Activated T-helper 1 cell treated with anti-CD3 and anti-CD28 coated beads, Interleukin-12 subunit alpha, Interleukin-12 subunit beta, Interleukin-2, Interleukin-4 antibody, amounts not matched to agents 30 ng/mL and 10 ng/mL and 1 ng/mL, durations not matched to agents 14 hours and 24 hours and 36 hours (primary cell): ENCODE measurements at regions of chr1 and their contacts with region 1.

Region 1: GRCh38 chr1:201481761-201482493 is 12.9 kb upstream of the PHLDA3 start:
- DNase-seq: peak; percentile 71
- H3K4me3 Mint-ChIP-seq: peak overlapping the region; percentile 76
- H3K27ac Mint-ChIP-seq: no peak overlapping the region
- H3K4me1 Mint-ChIP-seq: peaks cover 26% of the 10 kb centered on the region
- H3K27me3 Mint-ChIP-seq: peaks cover 13% of the 10 kb centered on the region

Region 2: GRCh38 chr1:201085916-201086735 is 395.8 kb before region 1 on chr1:
- intact Hi-C with region 1: no loop called
- DNase-seq: no peak
- H3K4me3 Mint-ChIP-seq: no peak overlapping the region
- H3K27ac Mint-ChIP-seq: no peak overlapping the region
- H3K4me1 Mint-ChIP-seq: no peaks in the 10 kb centered on the region
- H3K27me3 Mint-ChIP-seq: peaks cover 12% of the 10 kb centered on the region

Region 3: DNA sequence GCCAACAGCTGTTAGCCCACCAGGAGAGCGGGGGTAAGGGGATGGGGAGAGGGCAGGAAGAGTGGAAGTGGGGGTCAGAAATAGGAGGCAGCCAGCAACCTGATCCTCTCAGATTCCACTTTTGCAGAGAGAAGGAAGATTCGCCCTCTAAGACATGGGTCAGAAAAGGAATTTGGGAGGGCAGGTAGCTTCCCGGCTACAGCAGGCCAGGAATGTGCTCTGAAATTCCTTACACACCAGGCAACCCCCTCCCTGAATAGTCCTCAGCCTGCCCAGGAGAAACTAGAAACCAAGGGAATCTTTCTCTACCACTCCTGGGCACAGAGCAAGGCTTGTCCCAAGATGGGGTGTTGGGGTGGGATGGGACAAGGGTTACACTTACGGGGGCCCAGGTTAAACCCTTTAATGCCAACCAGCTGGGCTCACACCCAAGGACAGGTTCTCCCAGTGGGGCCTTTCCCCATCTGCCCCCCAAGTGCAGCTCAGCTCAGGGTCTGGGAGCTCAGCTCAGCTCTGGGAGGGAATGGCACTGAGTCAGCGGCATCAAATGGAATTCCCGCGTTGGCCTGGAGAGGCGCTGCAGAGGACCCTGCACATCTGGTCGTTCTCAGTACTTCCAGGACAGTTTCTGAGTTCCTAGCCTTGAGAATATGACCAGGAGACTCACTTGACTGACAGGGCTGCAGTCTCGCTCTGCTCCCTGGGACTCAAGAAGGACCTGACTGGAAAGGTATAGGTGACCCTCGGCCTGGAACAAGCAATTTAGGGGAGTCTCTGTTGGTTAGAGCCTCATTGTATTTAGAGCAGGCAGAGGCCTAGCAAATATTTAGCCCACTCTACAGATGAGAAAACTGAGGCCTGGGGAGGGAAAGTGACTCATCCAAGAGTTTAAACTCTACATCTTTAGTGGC is 105.2 kb before region 1 on chr1:
- intact Hi-C with region 1: no loop called
- DNase-seq: no peak
- H3K4me3 Mint-ChIP-seq: no peak overlapping the region
- H3K27ac Mint-ChIP-seq: no peak overlapping the region
- H3K4me1 Mint-ChIP-seq: no peaks in the 10 kb centered on the region
- H3K27me3 Mint-ChIP-seq: peaks cover 10% of the 10 kb centered on the region

Region 4: DNA sequence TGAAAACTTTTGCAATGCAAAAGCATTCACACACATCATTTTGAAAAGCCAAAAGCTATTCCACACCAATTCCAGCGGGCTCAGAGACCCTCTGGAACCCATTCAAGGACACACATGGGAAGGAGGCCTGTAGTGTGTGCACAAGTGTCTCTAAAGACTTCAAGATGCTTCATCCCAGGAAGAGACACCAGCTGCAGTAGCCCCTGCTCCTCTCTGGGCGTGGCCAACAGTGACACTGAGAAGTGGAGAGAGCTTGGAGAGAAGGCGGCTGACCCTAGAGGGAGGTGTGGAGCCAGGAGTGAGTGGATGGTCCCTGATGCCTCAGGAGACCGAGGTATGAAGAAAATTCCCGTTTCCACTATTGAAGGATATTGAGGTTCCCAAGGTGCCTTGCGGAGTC is 45.5 kb before region 1 on chr1:
- intact Hi-C with region 1: loop called (anchors 1 kb)
- DNase-seq: no peak
- H3K4me3 Mint-ChIP-seq: no peak overlapping the region
- H3K27ac Mint-ChIP-seq: no peak overlapping the region
- H3K4me1 Mint-ChIP-seq: peaks cover 8% of the 10 kb centered on the region
- H3K27me3 Mint-ChIP-seq: peaks cover 20% of the 10 kb centered on the region

Region 5: DNA sequence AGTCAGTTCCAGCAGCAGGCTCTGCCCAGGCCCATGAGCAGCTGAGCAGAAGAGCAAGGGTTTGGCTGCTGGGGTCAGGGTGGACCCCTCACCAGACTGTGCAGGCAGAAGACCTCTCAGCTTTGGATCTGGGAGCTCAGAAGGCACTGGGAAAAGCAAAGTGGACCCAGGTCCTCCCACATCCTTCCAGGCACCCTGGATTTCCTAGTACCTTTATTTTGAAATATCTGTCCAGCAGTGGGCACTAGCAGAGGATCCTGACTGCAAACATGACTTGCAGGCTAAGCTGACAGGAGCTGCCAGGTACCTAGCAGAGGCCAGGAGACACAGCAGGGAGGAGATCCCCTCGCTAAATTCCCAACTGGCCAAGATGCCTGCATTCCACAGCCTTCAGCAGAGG is 26.2 kb before region 1 on chr1:
- intact Hi-C with region 1: loop called (anchors 1 kb)
- DNase-seq: no peak
- H3K4me3 Mint-ChIP-seq: no peak overlapping the region
- H3K27ac Mint-ChIP-seq: no peak overlapping the region
- H3K4me1 Mint-ChIP-seq: peaks cover 31% of the 10 kb centered on the region
- H3K27me3 Mint-ChIP-seq: peaks cover 5% of the 10 kb centered on the region

Region 6: GRCh38 chr1:201506556-201507359 is 24.8 kb after region 1 on chr1 and contains the start of gene CSRP1:
- intact Hi-C with region 1: loop called (anchors 1 kb)
- DNase-seq: peak; percentile 78
- H3K4me3 Mint-ChIP-seq: peak within 1 kb of the TSS; percentile 93
- H3K27ac Mint-ChIP-seq: peak within 1 kb of the TSS; percentile 89
- H3K4me1 Mint-ChIP-seq: peaks cover 53% of the 10 kb centered on the region
- H3K27me3 Mint-ChIP-seq: no peaks in the 10 kb centered on the region
- total RNA-seq, gene CSRP1: 66.0 and 66.2 TPM in 2 replicates

Region 7: DNA sequence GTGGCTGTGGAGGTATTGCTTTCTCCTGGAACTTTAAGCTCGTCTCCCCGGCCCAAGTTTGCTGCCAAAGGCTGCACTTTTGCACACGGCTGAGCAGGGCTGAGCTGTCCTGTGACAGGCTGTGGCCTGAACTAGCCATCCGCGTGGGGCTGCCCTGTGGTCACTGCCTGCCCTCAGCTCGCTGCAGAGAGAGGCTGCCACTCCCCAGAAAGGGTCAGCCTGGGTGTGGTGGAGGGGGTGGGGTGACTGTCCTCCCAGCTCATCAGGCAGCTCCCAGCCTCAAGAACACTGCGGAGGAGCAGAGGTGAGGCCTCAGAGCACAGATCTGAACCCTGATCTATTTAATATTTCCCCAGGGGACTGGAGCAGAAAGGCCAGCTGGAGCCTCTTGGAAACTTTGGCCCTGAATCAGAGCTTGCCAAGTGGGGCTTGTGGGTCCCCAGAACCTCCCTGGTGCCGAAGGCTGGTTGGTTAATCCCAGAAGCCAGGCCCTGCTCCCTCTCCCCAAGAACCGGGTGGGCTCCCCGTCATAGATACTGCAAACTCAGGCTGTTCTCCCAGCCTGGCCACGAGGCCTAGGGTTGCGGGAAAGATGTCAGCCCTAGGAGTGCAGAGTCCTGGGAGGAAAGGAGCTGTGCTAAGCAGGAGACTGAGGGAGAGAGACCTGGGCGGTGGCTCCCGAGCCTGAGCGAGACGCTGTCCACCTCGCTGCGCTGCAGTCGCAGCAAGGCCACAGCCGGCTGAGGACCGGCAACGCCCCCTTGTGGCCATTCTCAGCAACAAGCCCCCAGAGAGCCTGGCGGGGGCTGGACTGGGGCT is 221.9 kb after region 1 on chr1:
- intact Hi-C with region 1: loop called (anchors 5 kb)
- DNase-seq: peak; percentile 40
- H3K4me3 Mint-ChIP-seq: no peak overlapping the region
- H3K27ac Mint-ChIP-seq: no peak overlapping the region
- H3K4me1 Mint-ChIP-seq: no peaks in the 10 kb centered on the region
- H3K27me3 Mint-ChIP-seq: peaks cover 13% of the 10 kb centered on the region